ENCODE measurements at regions of chr20 and their contacts with region 1.

Region 1: DNA sequence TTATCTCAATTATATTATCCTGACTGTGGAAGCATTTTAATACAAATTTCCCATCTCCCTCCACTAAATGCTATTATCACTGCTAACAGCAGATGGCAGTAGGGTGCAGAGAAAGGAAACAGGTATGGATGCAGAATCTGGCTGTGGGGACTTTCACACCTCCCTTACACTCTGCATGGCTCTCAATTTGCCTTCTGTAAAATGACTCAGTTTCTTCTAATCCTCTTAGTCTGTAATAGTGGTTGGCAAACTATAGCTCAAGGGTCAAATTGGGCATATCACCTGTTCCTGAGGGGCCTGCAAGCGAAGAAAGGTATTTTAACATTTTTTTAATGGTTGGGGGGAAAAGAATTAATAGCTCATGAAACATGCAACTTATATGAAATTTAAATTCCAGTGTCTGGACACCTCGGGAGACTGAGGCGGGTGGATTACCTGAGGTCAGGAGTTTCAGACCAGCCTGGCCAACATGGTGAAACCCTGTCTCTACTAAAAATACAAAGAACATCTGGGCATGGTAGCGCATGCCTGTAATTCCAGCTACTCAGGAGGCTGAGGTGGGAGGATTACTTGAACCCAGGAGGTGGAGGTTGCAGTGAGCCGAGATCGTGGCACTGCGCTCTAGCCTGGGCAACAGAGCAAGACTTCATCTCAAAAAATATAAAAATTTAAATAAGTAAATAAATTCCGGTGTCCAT is 83.5 kb downstream of the ZMYND8 start:
- DNase-seq: peak in 28 of 42 donors; percentile 31 to 88 (median 65)

Region 2: GRCh38 chr20:47196091-47197081 is 76.7 kb before region 1 on chr20:
- intact Hi-C with region 1: loop called (anchors 5 kb)
- DNase-seq: peak; percentile 49 to 90 (median 77)

Region 3: DNA sequence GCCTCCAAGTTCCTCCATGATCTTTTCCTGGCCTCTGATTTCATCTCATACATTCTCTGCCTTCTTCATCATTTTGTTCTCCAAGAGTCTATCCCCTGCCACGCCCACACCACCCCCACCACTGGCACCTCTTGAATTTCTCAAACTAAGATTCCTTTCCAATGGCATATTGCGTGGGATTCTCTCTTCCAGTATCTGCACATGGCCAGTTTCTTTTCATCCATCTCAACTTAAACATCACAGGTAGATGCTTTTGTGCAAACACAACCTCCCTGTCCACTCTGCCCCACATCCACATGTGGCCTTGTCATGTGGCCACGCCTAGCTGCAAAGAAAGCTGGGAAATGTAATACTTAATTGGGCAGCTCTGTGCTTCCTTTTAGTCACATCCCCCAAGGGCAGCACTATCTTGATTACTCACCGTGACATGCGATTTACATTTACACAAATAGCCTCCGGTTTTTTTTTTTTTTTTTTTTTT is 116.9 kb after region 1 on chr20:
- intact Hi-C with region 1: loop called (anchors 2 kb)
- DNase-seq: no peak